Activated B cell treated with CpG ODN at 0.5 μM for 24 hours (primary cell): ENCODE measurements at regions of chr13 and their contacts with region 1.

Region 1: DNA sequence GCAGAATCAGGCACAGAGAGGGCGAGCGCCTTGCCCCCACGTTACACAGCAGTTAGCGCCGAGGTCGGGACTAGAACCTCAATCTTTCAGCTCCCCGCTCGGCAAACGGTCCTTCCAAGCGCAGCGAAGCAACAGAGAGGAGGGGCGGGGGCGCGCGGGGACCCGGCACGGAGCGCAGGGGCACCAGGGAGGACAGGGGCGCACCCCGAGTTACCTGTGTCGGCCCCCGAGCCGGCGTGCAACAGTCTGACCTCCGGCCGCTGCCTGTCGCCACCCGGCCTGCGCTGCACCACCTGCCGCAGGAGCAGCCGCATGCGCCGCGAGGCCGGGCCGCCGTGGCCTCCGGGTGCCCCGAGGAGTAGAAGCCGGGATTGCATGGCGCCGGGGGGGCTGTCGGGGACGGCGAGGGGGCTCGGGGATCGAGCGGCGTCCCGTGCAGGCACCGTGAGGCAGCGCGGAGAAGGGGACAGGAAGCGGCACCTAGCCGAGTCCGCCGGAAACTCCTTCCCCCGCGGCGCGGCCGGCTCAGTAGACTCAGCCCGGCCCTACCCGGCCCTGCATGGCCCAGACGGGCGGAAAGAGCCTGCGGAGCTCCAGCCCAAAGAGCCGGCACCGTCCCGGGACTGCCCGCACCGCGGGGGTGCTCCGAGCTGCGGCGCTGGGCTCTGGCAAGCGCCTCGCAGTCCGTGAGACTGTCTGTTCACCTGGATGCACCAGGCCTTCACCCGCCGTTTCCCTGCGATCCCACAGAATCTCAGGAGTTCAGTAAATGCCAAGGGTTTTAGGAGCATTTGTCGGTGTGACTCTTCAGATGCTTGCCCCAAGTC is at the start of gene VWA8:
- DNase-seq: peak; percentile 79
- ATAC-seq: peak; percentile 98
- H3K4me3 Mint-ChIP-seq: peak within 1 kb of the TSS; percentile 91
- H3K27ac Mint-ChIP-seq: peak within 1 kb of the TSS; percentile 66
- H3K4me1 Mint-ChIP-seq: peaks cover 26% of the 10 kb centered on the region
- H3K27me3 Mint-ChIP-seq: peaks cover 4% of the 10 kb centered on the region
- CTCF ChIP-seq: no peak
- total RNA-seq, gene VWA8: 16.5 and 21.7 TPM in 2 replicates

Region 2: DNA sequence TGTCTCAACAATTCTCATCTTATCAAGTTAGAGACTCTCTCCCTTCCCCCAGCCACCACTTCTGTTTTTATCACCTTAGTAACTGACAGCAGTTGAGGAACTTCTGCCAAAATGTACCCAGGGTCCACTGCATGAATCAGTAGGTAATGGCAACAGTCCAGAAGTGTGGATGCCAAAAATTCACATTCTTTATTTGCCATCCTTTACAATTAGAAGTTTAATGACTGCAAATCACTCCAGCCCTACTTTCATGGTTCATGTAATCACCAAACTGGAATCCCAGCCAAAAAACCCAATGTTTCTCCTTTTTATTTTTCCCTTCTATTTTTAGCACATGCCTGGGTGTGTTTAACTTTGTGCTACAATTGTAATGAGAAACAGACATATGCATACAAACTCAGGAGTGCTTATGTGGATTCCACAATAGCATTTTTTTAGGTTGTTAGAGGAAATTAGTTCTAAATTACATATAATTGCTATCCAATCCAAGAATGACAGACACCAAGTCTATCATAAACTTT is 260.0 kb before region 1 on chr13:
- CTCF ChIA-PET with region 1: no interaction called
- POLR2A ChIA-PET with region 1: no interaction called
- intact Hi-C with region 1: no loop called
- DNase-seq: no peak
- ATAC-seq: no peak
- H3K4me3 Mint-ChIP-seq: no peak overlapping the region
- H3K27ac Mint-ChIP-seq: no peak overlapping the region
- H3K4me1 Mint-ChIP-seq: peaks cover 5% of the 10 kb centered on the region
- H3K27me3 Mint-ChIP-seq: no peaks in the 10 kb centered on the region
- CTCF ChIP-seq: no peak

Region 3: DNA sequence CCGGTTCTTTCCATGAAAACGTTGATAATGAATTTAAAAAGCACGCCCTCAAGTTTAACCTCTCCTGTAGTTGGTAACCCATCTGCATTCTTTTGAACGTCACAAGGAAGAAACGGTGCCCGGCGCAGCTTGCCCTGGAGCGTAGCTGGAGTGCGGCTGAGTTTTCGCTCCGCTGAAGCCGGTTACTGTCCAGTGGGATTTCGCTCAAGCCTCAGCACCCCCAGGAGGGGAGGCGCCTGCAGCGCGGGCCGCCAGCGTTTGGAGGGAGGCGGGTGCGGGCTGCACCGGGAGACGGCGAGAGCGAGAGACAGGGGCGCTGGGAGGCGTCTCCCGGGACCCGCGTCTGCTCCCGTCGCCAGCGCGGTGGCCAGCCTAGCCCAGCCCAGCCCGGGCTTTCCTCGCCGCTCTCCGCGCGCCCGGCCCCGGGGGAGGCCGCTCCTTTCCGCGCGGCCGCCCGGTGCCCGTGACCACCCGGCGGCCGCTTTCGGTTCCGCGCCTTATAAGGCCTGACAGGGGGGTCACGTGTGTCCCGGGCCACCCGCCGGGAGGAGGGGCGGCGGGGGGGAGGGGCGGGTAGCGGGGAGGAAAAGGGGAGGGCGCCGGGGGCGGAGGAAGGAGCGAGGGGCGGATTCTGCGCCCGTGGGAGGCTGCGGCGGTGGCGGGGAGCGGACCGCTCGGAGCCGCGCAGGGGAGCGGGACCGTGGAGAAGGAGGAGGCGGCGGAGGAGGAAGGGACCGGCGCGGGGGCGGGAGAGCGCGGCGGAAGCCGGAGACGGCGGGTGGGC is 79.3 kb after region 1 on chr13:
- CTCF ChIA-PET with region 1: no interaction called
- POLR2A ChIA-PET with region 1: no interaction called
- intact Hi-C with region 1: loop called (anchors 1 kb)
- DNase-seq: peak; percentile 78
- ATAC-seq: peak; percentile 82
- H3K4me3 Mint-ChIP-seq: peak overlapping the region; percentile 90
- H3K27ac Mint-ChIP-seq: peak overlapping the region; percentile 84
- H3K4me1 Mint-ChIP-seq: peaks cover 16% of the 10 kb centered on the region
- H3K27me3 Mint-ChIP-seq: peaks cover 6% of the 10 kb centered on the region
- CTCF ChIP-seq: no peak